ENCODE measurements at regions of chr10 and their contacts with region 1.

Region 1: DNA sequence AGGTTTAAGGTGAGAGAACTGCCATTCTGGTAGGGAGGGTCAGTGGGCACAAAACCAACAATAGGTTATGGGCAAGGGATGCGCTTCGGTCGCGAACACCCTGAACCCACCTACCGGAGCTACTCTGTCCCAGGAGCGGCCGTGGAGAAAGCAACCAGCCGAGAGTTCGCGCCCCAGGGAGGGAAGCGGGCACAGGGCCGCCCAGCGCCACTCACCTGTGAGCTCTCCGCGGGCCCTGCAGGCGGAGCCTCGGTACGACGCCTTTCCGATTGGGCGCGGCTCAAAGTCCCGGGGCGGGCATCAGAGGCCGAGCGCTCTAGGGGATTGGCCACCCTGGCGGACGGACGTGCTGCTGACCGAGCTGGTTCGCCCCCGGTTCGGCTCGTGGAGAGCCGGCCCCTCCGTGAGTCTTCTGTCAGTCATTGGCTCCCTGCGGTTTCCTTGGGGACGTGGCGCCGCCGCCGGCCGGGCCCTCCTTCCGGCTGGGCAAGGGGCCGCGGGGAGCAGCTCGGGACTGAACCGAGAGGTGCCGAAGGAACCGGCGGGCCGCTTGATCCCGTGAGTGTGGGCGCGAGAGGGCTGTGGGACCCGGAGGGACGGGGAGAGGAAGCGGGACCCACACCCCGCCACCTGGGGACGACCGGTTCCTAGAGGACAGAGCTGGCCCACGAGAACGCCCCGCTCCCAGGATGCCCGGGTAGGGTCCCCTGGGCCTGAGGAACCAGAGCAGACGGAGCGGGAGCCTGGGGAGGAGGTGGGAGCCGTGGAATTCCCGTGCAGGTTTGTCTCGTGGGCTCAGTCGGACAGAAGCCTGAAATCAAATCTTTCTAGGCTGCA is at the start of gene ENTPD7:
- DNase-seq: peak; percentile 94
- ATAC-seq: peak; percentile 100
- H3K4me3 Mint-ChIP-seq: peak within 1 kb of the TSS; percentile 81
- H3K27ac Mint-ChIP-seq: peak within 1 kb of the TSS; percentile 68
- H3K4me1 Mint-ChIP-seq: peaks cover 19% of the 10 kb centered on the region
- H3K27me3 Mint-ChIP-seq: peaks cover 23% of the 10 kb centered on the region
- total RNA-seq, gene ENTPD7: 5.8 to 6.0 TPM

Region 2: GRCh38 chr10:99605349-99605748 is 53.9 kb before region 1 on chr10:
- CTCF ChIA-PET with region 1: no interaction called
- POLR2A ChIA-PET with region 1: no interaction called
- DNase-seq: no peak
- ATAC-seq: no peak
- H3K4me3 Mint-ChIP-seq: no peak overlapping the region
- H3K27ac Mint-ChIP-seq: no peak overlapping the region
- H3K4me1 Mint-ChIP-seq: no peaks in the 10 kb centered on the region
- H3K27me3 Mint-ChIP-seq: peaks cover 2% of the 10 kb centered on the region

Region 3: GRCh38 chr10:99620713-99621453 is 38.4 kb before region 1 on chr10:
- CTCF ChIA-PET with region 1: interaction called, 5 read pairs
- POLR2A ChIA-PET with region 1: interaction called, 12 read pairs
- DNase-seq: peak; percentile 96
- ATAC-seq: peak; percentile 94
- H3K4me3 Mint-ChIP-seq: peak overlapping the region; percentile 84
- H3K27ac Mint-ChIP-seq: peak overlapping the region; percentile 96
- H3K4me1 Mint-ChIP-seq: peaks cover 39% of the 10 kb centered on the region
- H3K27me3 Mint-ChIP-seq: peaks cover 4% of the 10 kb centered on the region

Measured in activated CD8-positive, alpha-beta T cell treated with anti-CD3 and anti-CD28 coated beads, Interleukin-2, amount 10 ng/mL, durations not matched to agents 7 days and 5 days (primary cell).